GM12878 (cell line): ENCODE measurements at regions of chr3 and their contacts with region 1.

Region 1: GRCh38 chr3:5136211-5136918 is 14.3 kb downstream of the ARL8B start:
- DNase-seq: no peak
- ATAC-seq: peak; percentile 74
- H3K4me3 ChIP-seq: no peak overlapping the region
- H3K27ac ChIP-seq: peak overlapping the region; percentile 90
- H3K4me1 ChIP-seq: peaks cover 48% of the 10 kb centered on the region
- H3K27me3 ChIP-seq: no peaks in the 10 kb centered on the region
- CTCF ChIP-seq: peak; percentile 72 to 85 (median 79)
- EP300 ChIP-seq: no peak; a peak in 2 of 4 replicates
- POLR2A ChIP-seq: no peak
- RAD21 ChIP-seq: peak; percentile 83

Region 2: GRCh38 chr3:4914464-4914863 is 221.9 kb before region 1 on chr3:
- CTCF ChIA-PET with region 1: no interaction called
- POLR2A ChIA-PET with region 1: no interaction called
- RAD21 ChIA-PET with region 1: no interaction called
- SMC1A ChIA-PET with region 1: no interaction called
- in situ Hi-C with region 1: no loop called
- intact Hi-C with region 1: no loop called
- DNase-seq: no peak
- ATAC-seq: no peak
- H3K4me3 ChIP-seq: no peak overlapping the region
- H3K27ac ChIP-seq: no peak overlapping the region
- H3K4me1 ChIP-seq: no peaks in the 10 kb centered on the region
- H3K27me3 ChIP-seq: no peaks in the 10 kb centered on the region
- CTCF ChIP-seq: no peak
- EP300 ChIP-seq: no peak
- POLR2A ChIP-seq: no peak
- RAD21 ChIP-seq: no peak

Region 3: DNA sequence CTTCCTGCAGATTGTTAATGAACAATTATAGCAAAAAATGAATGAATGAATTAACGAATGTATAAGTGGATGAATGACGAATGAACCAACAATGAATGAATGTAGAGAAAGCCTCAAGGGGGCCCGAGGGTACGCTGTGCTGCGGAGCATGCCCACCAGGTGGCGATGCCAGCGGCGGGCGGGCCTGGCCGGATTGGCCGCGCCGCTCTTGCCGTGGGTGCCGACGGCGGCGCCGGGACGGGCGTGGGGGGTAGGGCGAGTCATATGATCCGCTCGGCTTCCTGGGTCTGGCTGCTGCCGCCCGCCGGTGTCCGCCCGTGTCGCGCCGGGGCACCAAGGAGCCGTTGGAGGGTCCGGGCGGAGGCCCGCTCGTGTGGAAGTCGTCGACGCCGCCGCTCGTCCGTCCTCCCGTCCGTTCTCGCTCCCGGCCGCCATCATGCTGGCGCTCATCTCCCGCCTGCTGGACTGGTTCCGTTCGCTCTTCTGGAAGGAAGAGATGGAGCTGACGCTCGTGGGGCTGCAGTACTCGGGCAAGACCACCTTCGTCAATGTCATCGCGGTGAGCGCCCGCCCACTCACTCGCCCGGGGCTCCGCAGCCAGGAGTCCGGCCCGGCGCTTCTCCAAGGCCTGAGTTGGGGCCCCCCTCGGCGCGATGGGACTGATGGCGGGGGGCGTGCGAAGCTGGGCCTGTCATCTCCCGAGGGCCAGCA is 14.2 kb before region 1 on chr3 and contains the start of gene ARL8B:
- CTCF ChIA-PET with region 1: interaction called, 62 read pairs
- POLR2A ChIA-PET with region 1: interaction called, 6 read pairs
- RAD21 ChIA-PET with region 1: interaction called, 6 read pairs
- SMC1A ChIA-PET with region 1: interaction called, 38 read pairs
- in situ Hi-C with region 1: no loop called
- intact Hi-C with region 1: no loop called
- DNase-seq: no peak
- ATAC-seq: peak; percentile 97
- H3K4me3 ChIP-seq: peak within 1 kb of the TSS; percentile 76
- H3K27ac ChIP-seq: peak within 1 kb of the TSS; percentile 78
- H3K4me1 ChIP-seq: no peaks in the 10 kb centered on the region
- H3K27me3 ChIP-seq: no peaks in the 10 kb centered on the region
- CTCF ChIP-seq: peak; percentile 88 to 99 (median 97); a peak in 5 of 6 replicates
- EP300 ChIP-seq: peak; percentile 36 to 66; a peak in 2 of 4 replicates
- POLR2A ChIP-seq: peak; percentile 98
- RAD21 ChIP-seq: peak; percentile 51; the same call in 1 of the 2 replicates
- polyA plus RNA-seq, gene ARL8B: 36.5 to 38.5 TPM

Region 4: DNA sequence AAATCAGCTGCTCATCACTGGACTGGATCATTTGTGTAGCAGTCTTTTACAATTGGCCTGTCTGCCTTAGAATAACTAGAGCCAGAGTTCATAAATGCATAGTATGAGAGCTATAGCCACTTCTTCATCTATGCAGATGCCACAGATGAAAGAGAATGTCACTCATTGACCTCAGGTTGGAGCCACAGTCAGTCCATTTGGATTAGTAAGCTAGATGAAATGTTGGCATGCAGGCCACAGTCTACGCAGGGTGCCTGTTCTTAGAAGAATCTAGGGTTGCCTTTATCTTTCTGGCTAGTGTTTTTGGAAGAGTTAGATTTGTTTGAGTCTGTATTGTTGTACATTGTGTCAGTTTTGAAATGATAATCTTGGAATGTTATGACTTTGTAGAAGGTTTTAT is 25.7 kb after region 1 on chr3:
- CTCF ChIA-PET with region 1: interaction called, 7 read pairs
- POLR2A ChIA-PET with region 1: interaction called, 5 read pairs
- RAD21 ChIA-PET with region 1: interaction called, 6 read pairs
- SMC1A ChIA-PET with region 1: interaction called, 10 read pairs
- in situ Hi-C with region 1: no loop called
- intact Hi-C with region 1: no loop called
- DNase-seq: no peak
- ATAC-seq: peak; percentile 19
- H3K4me3 ChIP-seq: no peak overlapping the region
- H3K27ac ChIP-seq: no peak overlapping the region
- H3K4me1 ChIP-seq: peaks cover 17% of the 10 kb centered on the region
- H3K27me3 ChIP-seq: no peaks in the 10 kb centered on the region
- CTCF ChIP-seq: no peak
- EP300 ChIP-seq: no peak
- POLR2A ChIP-seq: no peak
- RAD21 ChIP-seq: no peak

Region 5: GRCh38 chr3:5187156-5187919 is 51.0 kb after region 1 on chr3 and contains the start of gene EDEM1:
- CTCF ChIA-PET with region 1: interaction called, 163 read pairs
- POLR2A ChIA-PET with region 1: interaction called, 67 read pairs
- RAD21 ChIA-PET with region 1: interaction called, 93 read pairs
- SMC1A ChIA-PET with region 1: interaction called, 284 read pairs
- in situ Hi-C with region 1: no loop called
- intact Hi-C with region 1: loop called (anchors 2 kb)
- DNase-seq: peak; percentile 76
- ATAC-seq: peak; percentile 82
- H3K4me3 ChIP-seq: peak within 1 kb of the TSS; percentile 88
- H3K27ac ChIP-seq: peak within 1 kb of the TSS; percentile 96
- H3K4me1 ChIP-seq: peaks cover 29% of the 10 kb centered on the region
- H3K27me3 ChIP-seq: no peaks in the 10 kb centered on the region
- CTCF ChIP-seq: no peak
- EP300 ChIP-seq: no peak; a peak in 1 of 4 replicates
- POLR2A ChIP-seq: peak; percentile 78
- RAD21 ChIP-seq: no peak
- polyA plus RNA-seq, gene EDEM1: 18.9 to 48.0 TPM

Region 6: GRCh38 chr3:5205165-5205941 is 69.0 kb after region 1 on chr3:
- CTCF ChIA-PET with region 1: interaction called, 3 read pairs
- POLR2A ChIA-PET with region 1: interaction called, 9 read pairs
- RAD21 ChIA-PET with region 1: interaction called, 13 read pairs
- SMC1A ChIA-PET with region 1: interaction called, 12 read pairs
- in situ Hi-C with region 1: no loop called
- intact Hi-C with region 1: loop called (anchors 2 kb)
- DNase-seq: peak; percentile 86
- ATAC-seq: peak; percentile 98
- H3K4me3 ChIP-seq: no peak overlapping the region
- H3K27ac ChIP-seq: peak overlapping the region; percentile 38
- H3K4me1 ChIP-seq: peaks cover 9% of the 10 kb centered on the region
- H3K27me3 ChIP-seq: no peaks in the 10 kb centered on the region
- CTCF ChIP-seq: no peak
- EP300 ChIP-seq: peak; percentile 62 to 88; a peak in 3 of 4 replicates
- POLR2A ChIP-seq: 0 out of 2 replicates have a peak, but pooled peaks have one; percentile 40
- RAD21 ChIP-seq: peak; percentile 29; the same call in 1 of the 2 replicates

Region 7: DNA sequence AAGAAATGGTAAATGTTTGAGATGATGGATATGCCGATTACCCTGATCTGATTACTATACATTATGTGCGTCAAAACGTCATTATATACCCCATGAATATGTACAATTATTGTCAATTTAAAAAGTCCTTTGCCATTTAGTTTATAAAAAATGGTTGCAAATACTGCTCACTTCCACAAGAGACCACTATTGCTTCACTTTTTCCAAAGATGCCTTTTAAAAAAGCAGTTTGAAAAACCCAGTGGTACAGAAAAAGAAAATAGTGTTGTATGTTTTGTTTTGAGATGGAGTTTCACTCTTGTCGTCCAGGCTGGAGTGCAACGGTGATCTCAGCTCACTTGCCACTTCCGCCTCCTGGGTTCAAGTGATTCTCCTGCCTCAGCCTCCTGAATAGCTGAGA is 90.4 kb after region 1 on chr3:
- CTCF ChIA-PET with region 1: interaction called, 17 read pairs
- POLR2A ChIA-PET with region 1: interaction called, 4 read pairs
- RAD21 ChIA-PET with region 1: interaction called, 10 read pairs
- SMC1A ChIA-PET with region 1: interaction called, 5 read pairs
- in situ Hi-C with region 1: no loop called
- intact Hi-C with region 1: no loop called
- DNase-seq: no peak
- ATAC-seq: peak; percentile 26
- H3K4me3 ChIP-seq: no peak overlapping the region
- H3K27ac ChIP-seq: no peak overlapping the region
- H3K4me1 ChIP-seq: no peaks in the 10 kb centered on the region
- H3K27me3 ChIP-seq: no peaks in the 10 kb centered on the region
- CTCF ChIP-seq: peak; percentile 37 to 60 (median 45); a peak in 5 of 6 replicates
- EP300 ChIP-seq: no peak
- POLR2A ChIP-seq: no peak
- RAD21 ChIP-seq: peak; percentile 88

Region 8: GRCh38 chr3:5304789-5305683 is 168.7 kb after region 1 on chr3:
- CTCF ChIA-PET with region 1: interaction called, 3 read pairs
- POLR2A ChIA-PET with region 1: no interaction called
- RAD21 ChIA-PET with region 1: no interaction called
- SMC1A ChIA-PET with region 1: no interaction called
- in situ Hi-C with region 1: no loop called
- intact Hi-C with region 1: loop called (anchors 2 kb)
- DNase-seq: no peak
- ATAC-seq: peak; percentile 95
- H3K4me3 ChIP-seq: no peak overlapping the region
- H3K27ac ChIP-seq: no peak overlapping the region
- H3K4me1 ChIP-seq: no peaks in the 10 kb centered on the region
- H3K27me3 ChIP-seq: no peaks in the 10 kb centered on the region
- CTCF ChIP-seq: peak; percentile 68 to 78 (median 75)
- EP300 ChIP-seq: no peak
- POLR2A ChIP-seq: no peak
- RAD21 ChIP-seq: peak; percentile 85